Right ventricle myocardium inferior (tissue), 1 donor: ENCODE measurements at regions of chr1 and their contacts with region 1.

Region 1: GRCh38 chr1:35451125-35451528 is 106.1 kb downstream of the KIAA0319L start:
- DNase-seq: peak; percentile 92
- ATAC-seq: peak; percentile 84

Region 2: DNA sequence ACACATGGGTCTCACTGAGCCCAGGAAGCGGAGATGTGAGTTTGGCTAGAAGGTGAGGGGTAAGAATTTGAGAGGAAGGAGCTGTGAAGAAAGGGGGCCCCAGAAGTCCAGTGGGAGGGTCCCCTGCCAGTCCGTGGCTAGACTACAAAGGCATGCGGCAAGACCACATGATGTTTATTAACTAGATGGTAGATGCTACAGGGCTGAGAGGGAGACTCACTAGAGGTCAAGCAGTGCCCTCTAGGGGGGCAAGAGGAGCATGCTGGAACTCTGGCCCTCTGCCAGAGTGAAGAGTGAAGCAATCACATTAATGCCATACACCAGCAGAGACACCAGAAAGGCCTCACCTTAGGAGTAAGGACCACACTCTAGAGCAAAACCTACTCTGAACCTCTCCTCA is 93.9 kb after region 1 on chr1:
- intact Hi-C with region 1: loop called (anchors 5 kb)
- DNase-seq: no peak
- ATAC-seq: peak; percentile 84

Region 3: GRCh38 chr1:35564037-35564883 is 113.1 kb after region 1 on chr1:
- intact Hi-C with region 1: loop called (anchors 1 kb)
- DNase-seq: peak; percentile 83
- ATAC-seq: peak; percentile 35

Region 4: DNA sequence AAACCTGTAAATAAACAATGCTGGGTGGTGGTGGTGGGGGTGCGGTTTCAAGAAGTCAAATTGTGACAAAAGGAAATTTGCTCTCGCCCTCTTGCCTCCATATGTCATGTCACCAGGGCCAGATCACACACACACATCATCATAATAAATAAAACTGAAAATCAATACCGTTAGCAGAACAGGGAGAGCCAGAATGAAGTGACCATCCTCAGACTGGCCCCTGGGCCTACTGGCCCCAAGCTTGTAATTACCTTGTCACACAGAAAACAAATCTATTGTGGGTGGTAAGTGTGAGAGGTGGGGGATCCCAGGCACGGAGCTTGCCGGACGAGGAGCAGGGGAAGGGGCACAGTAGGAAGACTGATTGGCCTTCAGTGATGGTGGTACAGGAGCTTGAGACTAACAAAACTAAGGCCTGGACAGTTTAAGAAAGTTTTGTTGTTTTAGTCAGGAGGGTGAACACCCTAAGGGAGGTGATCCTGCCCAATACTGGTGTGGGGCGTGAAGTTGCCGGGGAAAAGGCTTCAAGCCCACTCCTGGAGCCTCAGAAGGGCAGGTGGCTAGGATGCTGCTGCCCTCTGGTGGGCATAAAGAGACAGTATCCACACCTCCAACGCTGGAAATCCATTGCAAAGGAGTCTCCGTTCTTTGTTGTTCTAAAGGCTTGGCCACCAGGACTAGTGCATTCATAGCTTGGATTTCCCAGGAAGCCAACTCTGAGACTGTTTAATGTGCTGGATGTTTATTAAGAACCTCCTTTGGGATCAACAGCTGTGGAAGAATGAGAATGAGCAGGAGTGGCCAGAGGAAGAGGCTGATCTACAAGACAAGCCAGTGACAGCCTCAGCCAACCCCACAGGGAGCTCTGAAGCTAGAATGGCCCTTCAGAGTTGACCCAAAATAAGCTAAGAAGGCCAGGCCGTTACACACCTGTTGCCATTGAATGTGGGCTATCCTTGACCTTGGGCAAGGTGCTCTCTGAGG is 275.6 kb after region 1 on chr1:
- intact Hi-C with region 1: loop called (anchors 5 kb)
- DNase-seq: no peak
- ATAC-seq: peak; percentile 62